GM12878 (cell line): ENCODE measurements at regions of chr14 and their contacts with region 1.

Region 1: DNA sequence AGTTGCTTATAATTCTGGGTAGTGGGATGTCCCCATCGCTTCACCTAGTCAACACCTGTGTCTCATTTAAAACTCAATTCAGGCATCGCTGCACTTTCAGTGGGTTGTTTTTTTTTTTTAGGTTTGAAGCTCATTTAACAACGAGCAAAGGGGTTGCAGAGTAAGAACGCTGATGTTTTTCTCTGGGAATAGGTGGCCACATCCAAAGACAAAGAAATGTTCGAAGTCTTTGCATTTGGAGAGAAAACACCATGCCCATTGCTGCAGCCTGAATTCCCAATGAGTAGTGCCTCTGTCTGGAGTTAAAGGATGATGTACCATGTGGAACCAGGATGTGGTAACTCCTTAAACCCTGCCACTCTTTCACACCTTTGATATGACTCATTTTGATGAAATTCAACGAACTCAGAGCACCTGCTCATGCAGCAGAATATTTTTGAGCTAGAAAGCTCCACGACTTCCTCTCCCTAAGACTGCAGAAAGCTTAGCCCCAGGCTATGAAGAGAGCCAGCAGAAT is 35.1 kb upstream of the BATF start:
- DNase-seq: peak; percentile 89
- ATAC-seq: peak; percentile 84
- H3K4me3 ChIP-seq: no peak overlapping the region
- H3K27ac ChIP-seq: peak overlapping the region; percentile 69
- H3K4me1 ChIP-seq: peaks cover 33% of the 10 kb centered on the region
- H3K27me3 ChIP-seq: no peaks in the 10 kb centered on the region
- CTCF ChIP-seq: no peak
- EP300 ChIP-seq: peak; percentile 75 to 86; a peak in 3 of 4 replicates
- POLR2A ChIP-seq: no peak
- RAD21 ChIP-seq: peak; percentile 9; the same call in 1 of the 2 replicates

Region 2: DNA sequence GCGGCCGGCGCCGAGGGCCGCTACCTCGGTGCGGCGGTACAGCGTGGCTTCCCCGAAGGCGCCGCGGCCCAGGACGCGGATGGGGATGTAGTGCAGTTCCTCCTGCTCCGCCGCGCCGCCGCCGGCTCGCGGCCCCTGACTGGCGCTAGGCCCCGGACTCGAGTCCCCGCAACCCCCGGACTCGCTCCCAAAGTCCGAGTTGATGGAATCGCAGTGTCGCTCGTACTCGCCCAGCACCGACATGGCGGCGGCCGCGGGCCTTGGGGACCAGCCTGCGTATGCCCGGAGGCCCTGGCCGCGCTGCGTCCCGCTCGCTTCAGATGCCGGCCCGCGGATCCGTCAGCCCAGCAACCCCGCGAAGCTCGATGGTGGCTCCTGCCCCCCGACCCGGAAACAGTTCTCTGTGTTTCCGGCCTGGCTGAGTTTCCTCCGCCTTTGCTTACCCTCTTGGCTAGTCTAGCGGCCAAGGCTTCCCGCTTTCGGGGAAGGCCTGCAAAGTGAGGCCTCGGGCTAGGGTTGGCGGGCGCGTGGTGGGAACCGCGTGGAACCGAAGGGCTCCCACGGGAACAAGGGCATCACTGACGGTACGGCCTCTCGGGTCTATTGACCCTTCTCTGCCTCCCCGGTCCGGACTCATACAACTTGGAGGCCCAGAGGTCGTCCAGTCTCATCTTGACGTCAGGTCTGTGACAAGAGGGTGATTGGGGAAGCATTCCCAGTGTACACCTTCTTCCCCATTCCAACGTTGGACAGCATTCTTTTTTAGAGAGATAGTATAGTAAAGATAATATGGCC is 360.3 kb before region 1 on chr14 and contains the start of gene NEK9:
- CTCF ChIA-PET with region 1: interaction called, 4 read pairs
- POLR2A ChIA-PET with region 1: interaction called, 4 read pairs
- RAD21 ChIA-PET with region 1: interaction called, 3 read pairs
- SMC1A ChIA-PET with region 1: interaction called, 5 read pairs
- in situ Hi-C with region 1: loop called (anchors 10 kb)
- intact Hi-C with region 1: loop called (anchors 2 kb)
- DNase-seq: peak; percentile 45
- ATAC-seq: peak; percentile 98
- H3K4me3 ChIP-seq: peak within 1 kb of the TSS; percentile 76
- H3K27ac ChIP-seq: peak within 1 kb of the TSS; percentile 88
- H3K4me1 ChIP-seq: peaks cover 11% of the 10 kb centered on the region
- H3K27me3 ChIP-seq: no peaks in the 10 kb centered on the region
- CTCF ChIP-seq: no peak
- EP300 ChIP-seq: no peak
- POLR2A ChIP-seq: peak; percentile 98
- RAD21 ChIP-seq: no peak
- polyA plus RNA-seq, gene NEK9: 6.0 to 15.7 TPM

Region 3: GRCh38 chr14:75427482-75428229 is 59.6 kb before region 1 on chr14 and contains the start of gene JDP2:
- CTCF ChIA-PET with region 1: interaction called, 13 read pairs
- POLR2A ChIA-PET with region 1: no interaction called
- RAD21 ChIA-PET with region 1: interaction called, 19 read pairs
- SMC1A ChIA-PET with region 1: interaction called, 11 read pairs
- in situ Hi-C with region 1: no loop called
- intact Hi-C with region 1: loop called (anchors 5 kb)
- DNase-seq: no peak
- ATAC-seq: peak; percentile 69
- H3K4me3 ChIP-seq: peak within 1 kb of the TSS; percentile 86
- H3K27ac ChIP-seq: peak within 1 kb of the TSS; percentile 91
- H3K4me1 ChIP-seq: peaks cover 27% of the 10 kb centered on the region
- H3K27me3 ChIP-seq: no peaks in the 10 kb centered on the region
- CTCF ChIP-seq: 0 out of 6 replicates have a peak, but pooled peaks of 1 of the 3 experiments have one; percentile 3
- EP300 ChIP-seq: no peak
- POLR2A ChIP-seq: peak; percentile 66; the same call in 1 of the 2 replicates
- RAD21 ChIP-seq: no peak
- polyA plus RNA-seq, gene JDP2: 0.71 to 1.2 TPM

Region 4: DNA sequence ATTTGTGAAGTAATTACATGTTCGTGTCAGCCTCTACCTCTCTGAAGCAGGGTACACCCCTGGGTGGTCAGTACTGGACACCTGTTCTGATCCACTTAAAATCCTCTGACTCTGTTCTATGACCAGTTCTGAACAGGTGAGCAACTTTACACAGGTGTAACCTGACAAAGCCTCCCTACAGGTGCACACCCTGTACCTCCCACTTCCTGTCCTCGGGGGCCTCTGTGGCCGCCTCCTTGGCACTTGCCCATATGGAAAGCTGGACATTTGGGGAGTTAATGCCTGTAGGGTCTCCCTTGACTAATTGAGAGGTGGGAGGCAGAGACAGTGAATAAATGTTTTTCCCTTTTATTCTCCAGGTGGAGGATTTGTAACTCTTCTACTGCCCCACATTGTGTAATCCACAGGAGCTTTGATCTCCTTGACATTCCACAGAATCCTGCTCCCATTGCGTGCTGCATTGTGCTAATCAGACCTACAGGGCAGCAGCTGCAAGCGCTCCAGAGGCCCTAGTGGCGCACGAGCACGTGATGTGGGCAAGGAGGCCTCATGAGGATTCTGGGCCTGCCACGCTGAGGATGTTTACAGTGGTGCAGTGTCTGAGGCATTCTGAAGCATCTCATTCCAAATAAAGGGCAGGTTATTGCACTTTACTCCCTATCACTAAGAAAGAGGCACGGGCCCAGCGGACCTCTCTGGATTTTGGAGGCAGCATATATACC is 10.8 kb before region 1 on chr14:
- CTCF ChIA-PET with region 1: interaction called, 16 read pairs
- POLR2A ChIA-PET with region 1: interaction called, 4 read pairs
- RAD21 ChIA-PET with region 1: interaction called, 25 read pairs
- SMC1A ChIA-PET with region 1: interaction called, 27 read pairs
- in situ Hi-C with region 1: no loop called
- intact Hi-C with region 1: no loop called
- DNase-seq: no peak
- ATAC-seq: no peak
- H3K4me3 ChIP-seq: no peak overlapping the region
- H3K27ac ChIP-seq: no peak overlapping the region
- H3K4me1 ChIP-seq: peaks cover 29% of the 10 kb centered on the region
- H3K27me3 ChIP-seq: no peaks in the 10 kb centered on the region
- CTCF ChIP-seq: no peak
- EP300 ChIP-seq: no peak
- POLR2A ChIP-seq: no peak
- RAD21 ChIP-seq: no peak

Region 5: GRCh38 chr14:75514673-75515628 is 27.7 kb after region 1 on chr14:
- CTCF ChIA-PET with region 1: interaction called, 520 read pairs
- POLR2A ChIA-PET with region 1: interaction called, 385 read pairs
- RAD21 ChIA-PET with region 1: interaction called, 645 read pairs
- SMC1A ChIA-PET with region 1: interaction called, 619 read pairs
- in situ Hi-C with region 1: no loop called
- intact Hi-C with region 1: loop called (anchors 5 kb)
- DNase-seq: peak; percentile 80
- ATAC-seq: peak; percentile 76
- H3K4me3 ChIP-seq: peak overlapping the region; percentile 73
- H3K27ac ChIP-seq: peak overlapping the region; percentile 97
- H3K4me1 ChIP-seq: peaks cover 54% of the 10 kb centered on the region
- H3K27me3 ChIP-seq: no peaks in the 10 kb centered on the region
- CTCF ChIP-seq: no peak
- EP300 ChIP-seq: peak in 1 of 2 experiments; percentile 73; a peak in 3 of 4 replicates
- POLR2A ChIP-seq: 0 out of 2 replicates have a peak, but pooled peaks have one; percentile 36
- RAD21 ChIP-seq: no peak

Region 6: GRCh38 chr14:75542588-75543091 is 55.4 kb after region 1 on chr14:
- CTCF ChIA-PET with region 1: interaction called, 12 read pairs
- POLR2A ChIA-PET with region 1: interaction called, 3 read pairs
- RAD21 ChIA-PET with region 1: interaction called, 111 read pairs
- SMC1A ChIA-PET with region 1: interaction called, 12 read pairs
- in situ Hi-C with region 1: no loop called
- intact Hi-C with region 1: loop called (anchors 10 kb)
- DNase-seq: no peak
- ATAC-seq: peak; percentile 84
- H3K4me3 ChIP-seq: peak overlapping the region; percentile 52
- H3K27ac ChIP-seq: peak overlapping the region; percentile 96
- H3K4me1 ChIP-seq: peaks cover 60% of the 10 kb centered on the region
- H3K27me3 ChIP-seq: no peaks in the 10 kb centered on the region
- CTCF ChIP-seq: no peak
- EP300 ChIP-seq: no peak
- POLR2A ChIP-seq: peak; percentile 64
- RAD21 ChIP-seq: no peak

Region 7: DNA sequence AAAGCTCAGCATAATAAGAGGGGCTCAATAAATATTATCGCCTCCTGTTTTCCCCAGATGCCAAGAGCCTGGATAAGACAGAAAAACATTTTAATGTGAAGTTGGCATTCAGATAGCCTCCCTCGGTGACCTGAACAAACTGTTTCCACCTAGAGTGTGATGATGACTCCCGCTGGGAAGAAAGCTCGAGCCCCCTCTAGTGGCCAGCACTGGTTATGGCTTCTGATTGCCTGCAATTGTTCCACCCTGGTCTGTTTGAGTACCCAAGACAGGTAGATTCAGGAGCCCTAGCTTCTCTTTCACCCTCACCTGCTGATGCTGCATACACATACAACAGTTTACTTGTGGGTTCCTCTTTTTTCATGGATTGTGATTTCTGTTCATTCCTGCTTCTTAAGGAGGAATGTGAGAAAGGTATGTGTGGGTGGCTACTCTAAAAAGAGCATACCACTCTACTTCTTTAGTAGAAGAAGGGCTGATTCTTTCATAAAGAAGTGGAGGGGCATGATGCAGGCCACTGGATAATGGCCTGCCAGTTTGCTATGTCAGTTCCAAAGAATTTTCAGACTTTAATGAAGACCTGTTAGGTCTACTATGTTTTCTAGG is 167.0 kb after region 1 on chr14:
- CTCF ChIA-PET with region 1: interaction called, 81 read pairs
- POLR2A ChIA-PET with region 1: no interaction called
- RAD21 ChIA-PET with region 1: interaction called, 10 read pairs
- SMC1A ChIA-PET with region 1: interaction called, 5 read pairs
- in situ Hi-C with region 1: no loop called
- intact Hi-C with region 1: no loop called
- DNase-seq: peak; percentile 38
- ATAC-seq: peak; percentile 98
- H3K4me3 ChIP-seq: no peak overlapping the region
- H3K27ac ChIP-seq: no peak overlapping the region
- H3K4me1 ChIP-seq: no peaks in the 10 kb centered on the region
- H3K27me3 ChIP-seq: no peaks in the 10 kb centered on the region
- CTCF ChIP-seq: peak; percentile 97 to 98 (median 97)
- EP300 ChIP-seq: no peak
- POLR2A ChIP-seq: no peak
- RAD21 ChIP-seq: peak; percentile 97

Region 8: DNA sequence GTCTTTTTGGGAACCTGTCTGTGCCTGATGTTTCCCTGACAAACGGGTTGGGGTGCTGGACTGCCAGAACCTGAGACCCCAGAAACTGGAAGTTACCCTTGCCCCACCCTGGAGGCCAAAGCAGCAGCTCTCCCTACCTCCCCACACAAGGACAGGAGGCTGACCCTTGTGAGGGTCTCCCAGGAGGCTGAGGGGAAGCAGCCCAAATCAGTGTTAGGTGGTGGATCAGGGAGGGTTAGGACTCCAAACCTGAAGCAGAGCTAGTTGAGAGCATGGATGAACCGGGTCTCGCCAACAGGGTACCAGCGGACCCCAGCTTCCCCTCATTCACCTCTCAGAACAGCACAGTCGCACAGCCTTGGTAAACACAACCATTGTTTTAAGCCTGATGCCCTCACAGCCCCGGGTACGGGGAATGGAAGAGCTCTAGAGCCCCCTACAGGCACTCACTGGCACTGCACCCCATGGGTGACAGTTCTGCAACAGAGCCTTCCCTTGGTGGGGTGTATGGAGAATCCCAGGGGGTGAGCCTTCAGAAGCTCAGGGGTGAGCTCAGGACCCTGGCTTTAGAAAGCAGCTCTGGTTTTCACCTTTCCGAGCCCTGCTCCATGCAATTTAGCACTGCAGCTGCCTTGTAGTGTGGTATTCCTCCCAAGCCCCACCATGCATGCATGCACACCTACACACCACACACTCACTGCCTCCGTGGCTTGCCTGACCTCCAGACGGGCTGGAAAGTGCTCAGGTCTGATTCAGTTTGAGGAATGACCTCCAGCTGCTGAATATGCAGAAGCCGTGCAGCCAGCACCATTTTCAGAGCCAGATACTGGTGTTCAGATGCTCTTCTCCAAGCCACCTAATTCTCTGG is 899.9 kb after region 1 on chr14:
- CTCF ChIA-PET with region 1: no interaction called
- POLR2A ChIA-PET with region 1: no interaction called
- RAD21 ChIA-PET with region 1: no interaction called
- SMC1A ChIA-PET with region 1: no interaction called
- in situ Hi-C with region 1: no loop called
- intact Hi-C with region 1: no loop called
- DNase-seq: peak; percentile 7
- ATAC-seq: peak; percentile 99
- H3K4me3 ChIP-seq: no peak overlapping the region
- H3K27ac ChIP-seq: no peak overlapping the region
- H3K4me1 ChIP-seq: no peaks in the 10 kb centered on the region
- H3K27me3 ChIP-seq: no peaks in the 10 kb centered on the region
- CTCF ChIP-seq: peak; percentile 99
- EP300 ChIP-seq: no peak
- POLR2A ChIP-seq: no peak
- RAD21 ChIP-seq: peak; percentile 98